ENCODE measurements at regions of chr12 and their contacts with region 1.

Region 1: DNA sequence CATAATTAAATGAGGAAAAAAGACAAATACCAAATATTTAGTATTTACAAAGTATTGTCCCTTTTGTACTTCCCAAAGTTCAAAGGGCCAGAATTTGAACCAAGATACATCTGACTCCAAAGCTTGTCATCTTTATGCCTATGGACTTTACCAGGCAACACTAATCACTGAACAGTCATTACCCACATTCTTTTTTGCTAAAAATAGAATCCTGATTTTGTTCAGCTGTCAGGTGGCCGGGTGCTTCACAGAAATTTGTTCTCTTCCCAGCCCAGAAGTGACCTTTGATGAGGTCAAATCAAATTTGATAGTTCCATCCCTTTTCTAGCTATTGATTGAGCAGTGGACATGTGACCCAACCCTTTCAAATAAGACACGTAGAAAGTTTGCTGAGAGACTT is 121.6 kb downstream of the LLPH start:
- DNase-seq: no peak
- ATAC-seq: no peak
- H3K4me3 ChIP-seq: no peak overlapping the region
- H3K4me3 Mint-ChIP-seq: no peak overlapping the region
- H3K27ac ChIP-seq: no peak overlapping the region
- H3K27ac Mint-ChIP-seq: no peak overlapping the region
- H3K4me1 ChIP-seq: no peaks in the 10 kb centered on the region
- H3K4me1 Mint-ChIP-seq: no peaks in the 10 kb centered on the region
- H3K27me3 ChIP-seq: no peaks in the 10 kb centered on the region
- H3K27me3 Mint-ChIP-seq: peaks cover 15 to 42% (median 27%) of the 10 kb centered on the region in 5 donors

Region 2: GRCh38 chr12:66461331-66461730 is 452.3 kb after region 1 on chr12:
- CTCF ChIA-PET with region 1: no interaction called
- POLR2A ChIA-PET with region 1: no interaction called
- intact Hi-C with region 1: loop called in 1 of 2 experiments (anchors 5 kb)
- DNase-seq: no peak
- ATAC-seq: no peak
- H3K4me3 ChIP-seq: no peak overlapping the region
- H3K4me3 Mint-ChIP-seq: no peak overlapping the region
- H3K27ac ChIP-seq: no peak overlapping the region
- H3K27ac Mint-ChIP-seq: no peak overlapping the region
- H3K4me1 ChIP-seq: no peaks in the 10 kb centered on the region
- H3K4me1 Mint-ChIP-seq: no peaks in the 10 kb centered on the region
- H3K27me3 ChIP-seq: no peaks in the 10 kb centered on the region
- H3K27me3 Mint-ChIP-seq: peaks cover 0 to 2% (median 0%) of the 10 kb centered on the region in 5 donors

Measured in naive thymus-derived CD4-positive, alpha-beta T cell (primary cell).